Naive thymus-derived CD4-positive, alpha-beta T cell (primary cell): ENCODE measurements at regions of chr19 and their contacts with region 1.

Region 1: DNA sequence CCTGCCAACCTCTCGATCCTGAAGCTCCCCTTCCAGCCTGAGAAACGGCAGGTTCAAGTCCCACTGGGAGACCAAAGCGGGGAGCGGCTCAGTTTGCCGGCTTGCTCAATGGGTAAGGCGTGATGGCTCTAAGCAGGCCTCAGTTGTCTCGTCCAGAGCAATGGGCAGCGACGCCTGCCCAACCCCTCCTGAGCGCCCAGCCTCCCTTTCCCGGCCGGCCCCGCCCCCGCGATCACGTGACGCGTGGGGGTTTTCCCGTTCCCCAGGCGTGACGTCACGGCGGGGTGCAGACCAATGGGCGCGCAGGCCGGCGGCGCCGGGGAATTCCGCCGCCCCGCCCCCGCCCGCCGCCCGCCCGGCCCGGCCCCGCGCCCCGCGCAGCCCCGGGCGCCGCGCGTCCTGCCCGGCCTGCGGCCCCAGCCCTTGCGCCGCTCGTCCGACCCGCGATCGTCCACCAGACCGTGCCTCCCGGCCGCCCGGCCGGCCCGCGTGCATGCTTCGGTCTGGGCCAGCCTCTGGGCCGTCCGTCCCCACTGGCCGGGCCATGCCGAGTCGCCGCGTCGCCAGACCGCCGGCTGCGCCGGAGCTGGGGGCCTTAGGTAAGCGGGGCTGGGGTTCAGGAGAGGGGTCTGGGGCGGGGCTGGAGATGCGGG is at the start of gene RELB:
- DNase-seq: peak; percentile 90 to 100 (median 94)
- ATAC-seq: peak; percentile 75
- H3K4me3 ChIP-seq: peak within 1 kb of the TSS; percentile 92
- H3K4me3 Mint-ChIP-seq: peak within 1 kb of the TSS; percentile 91 to 100 (median 96)
- H3K27ac ChIP-seq: peak within 1 kb of the TSS; percentile 100
- H3K27ac Mint-ChIP-seq: peak within 1 kb of the TSS; percentile 93 to 100 (median 100)
- H3K4me1 ChIP-seq: peaks cover 8 to 13% of the 10 kb centered on the region in 2 donors
- H3K4me1 Mint-ChIP-seq: peaks cover 8 to 25% (median 14%) of the 10 kb centered on the region in 7 donors
- H3K27me3 ChIP-seq: no peaks in the 10 kb centered on the region
- H3K27me3 Mint-ChIP-seq: no peaks in the 10 kb centered on the region
- total RNA-seq, gene RELB: 30.7 to 87.3 (median 71.3) TPM

Region 2: GRCh38 chr19:44752816-44753618 is 248.2 kb before region 1 on chr19:
- CTCF ChIA-PET with region 1: no interaction called
- POLR2A ChIA-PET with region 1: no interaction called
- intact Hi-C with region 1: loop called in 1 of 2 experiments (anchors 1 kb)
- DNase-seq: peak; percentile 80 to 96 (median 95)
- ATAC-seq: peak; percentile 85
- H3K4me3 ChIP-seq: peak overlapping the region; percentile 40
- H3K4me3 Mint-ChIP-seq: peak overlapping the region; percentile 91 to 96 (median 94)
- H3K27ac ChIP-seq: peak overlapping the region; percentile 97
- H3K27ac Mint-ChIP-seq: peak overlapping the region; percentile 93 to 99 (median 97)
- H3K4me1 ChIP-seq: peaks cover 46 to 60% of the 10 kb centered on the region in 2 donors
- H3K4me1 Mint-ChIP-seq: peaks cover 36 to 71% (median 63%) of the 10 kb centered on the region in 7 donors
- H3K27me3 ChIP-seq: no peaks in the 10 kb centered on the region
- H3K27me3 Mint-ChIP-seq: peaks cover 0 to 3% (median 0%) of the 10 kb centered on the region in 5 donors

Region 3: GRCh38 chr19:44890366-44891015 is 110.7 kb before region 1 on chr19:
- CTCF ChIA-PET with region 1: no interaction called
- POLR2A ChIA-PET with region 1: no interaction called
- intact Hi-C with region 1: loop called (anchors 1 kb)
- DNase-seq: peak; percentile 97 to 100 (median 100)
- ATAC-seq: peak; percentile 86
- H3K4me3 ChIP-seq: peak overlapping the region; percentile 69
- H3K4me3 Mint-ChIP-seq: peak overlapping the region; percentile 83 to 93 (median 89)
- H3K27ac ChIP-seq: peak overlapping the region; percentile 84
- H3K27ac Mint-ChIP-seq: peak overlapping the region; percentile 90 to 96 (median 94)
- H3K4me1 ChIP-seq: peaks cover 10 to 20% of the 10 kb centered on the region in 2 donors
- H3K4me1 Mint-ChIP-seq: peaks cover 18 to 44% (median 35%) of the 10 kb centered on the region in 7 donors
- H3K27me3 ChIP-seq: no peaks in the 10 kb centered on the region
- H3K27me3 Mint-ChIP-seq: no peaks in the 10 kb centered on the region

Region 4: DNA sequence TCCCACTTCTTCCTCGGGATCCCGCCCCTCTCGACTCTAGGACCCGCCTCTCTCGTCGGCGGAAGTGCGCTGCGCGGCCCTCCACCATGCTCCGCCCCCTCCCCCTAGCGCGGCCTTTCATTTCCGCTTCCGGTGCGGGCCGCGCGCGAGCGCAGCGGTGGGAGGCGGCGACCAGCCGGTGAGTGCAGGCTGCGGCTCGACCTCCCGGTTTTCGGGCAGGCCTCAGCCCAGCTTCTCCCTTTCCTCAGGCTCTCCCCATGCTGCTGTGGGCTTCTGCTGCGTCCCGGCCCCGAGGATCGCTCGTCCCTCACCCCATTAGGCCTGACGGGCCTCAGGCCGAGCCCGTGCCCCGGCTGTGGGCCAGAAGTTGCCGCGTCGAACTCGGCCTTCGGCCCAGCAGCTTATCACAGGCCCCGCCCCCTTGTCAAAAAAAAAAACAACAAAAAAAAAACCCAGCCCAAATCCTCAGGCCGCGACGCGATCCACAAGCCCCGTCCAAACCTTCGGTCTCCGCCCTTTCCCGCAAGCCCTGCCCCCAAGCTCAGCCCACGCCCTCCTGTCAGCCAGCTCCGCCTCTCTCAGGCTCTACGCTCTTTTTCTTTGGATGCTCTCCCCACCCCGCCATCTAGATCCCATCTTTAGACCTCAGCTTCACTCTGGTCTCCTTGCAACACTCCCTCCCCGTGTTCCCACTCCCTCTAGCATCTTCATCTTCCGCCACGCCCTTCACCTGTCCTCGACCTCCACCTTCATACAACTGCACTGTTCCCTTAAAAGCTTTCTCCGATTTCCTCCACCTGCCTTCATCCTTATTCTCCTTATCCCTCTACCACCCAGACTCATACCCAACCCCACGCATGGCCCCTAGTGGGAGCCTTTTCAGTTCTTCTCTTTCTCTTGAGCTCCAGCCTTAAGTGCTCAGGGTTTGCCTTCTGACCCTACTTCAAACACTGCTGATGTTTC is 38.0 kb after region 1 on chr19 and contains the start of gene CLASRP:
- CTCF ChIA-PET with region 1: no interaction called
- POLR2A ChIA-PET with region 1: interaction called, 18 read pairs
- intact Hi-C with region 1: loop called (anchors 1 kb)
- DNase-seq: peak; percentile 73 to 92 (median 85)
- ATAC-seq: peak; percentile 96
- H3K4me3 ChIP-seq: peak within 1 kb of the TSS; percentile 85
- H3K4me3 Mint-ChIP-seq: peak within 1 kb of the TSS; percentile 89 to 100 (median 99)
- H3K27ac ChIP-seq: peak within 1 kb of the TSS; percentile 100
- H3K27ac Mint-ChIP-seq: peak within 1 kb of the TSS; percentile 90 to 99 (median 98)
- H3K4me1 ChIP-seq: peaks cover 15 to 24% of the 10 kb centered on the region in 2 donors
- H3K4me1 Mint-ChIP-seq: peaks cover 26 to 43% (median 33%) of the 10 kb centered on the region in 7 donors
- H3K27me3 ChIP-seq: no peaks in the 10 kb centered on the region
- H3K27me3 Mint-ChIP-seq: no peaks in the 10 kb centered on the region
- total RNA-seq, gene CLASRP: 94.7 to 185 (median 163) TPM

Region 5: GRCh38 chr19:45079063-45079910 is 78.1 kb after region 1 on chr19 and contains the start of gene GEMIN7:
- CTCF ChIA-PET with region 1: no interaction called
- POLR2A ChIA-PET with region 1: no interaction called
- intact Hi-C with region 1: loop called (anchors 5 kb)
- DNase-seq: peak; percentile 60 to 90 (median 75)
- ATAC-seq: peak; percentile 76
- H3K4me3 ChIP-seq: peak within 1 kb of the TSS; percentile 99
- H3K4me3 Mint-ChIP-seq: peak within 1 kb of the TSS; percentile 87 to 99 (median 94)
- H3K27ac ChIP-seq: peak within 1 kb of the TSS; percentile 86
- H3K27ac Mint-ChIP-seq: peak within 1 kb of the TSS; percentile 79 to 94 (median 84)
- H3K4me1 ChIP-seq: peaks cover 22 to 31% of the 10 kb centered on the region in 2 donors
- H3K4me1 Mint-ChIP-seq: peaks cover 32 to 53% (median 48%) of the 10 kb centered on the region in 7 donors
- H3K27me3 ChIP-seq: no peaks in the 10 kb centered on the region
- H3K27me3 Mint-ChIP-seq: no peaks in the 10 kb centered on the region
- total RNA-seq, gene GEMIN7: 4.9 to 31.6 (median 16.6) TPM

Region 6: DNA sequence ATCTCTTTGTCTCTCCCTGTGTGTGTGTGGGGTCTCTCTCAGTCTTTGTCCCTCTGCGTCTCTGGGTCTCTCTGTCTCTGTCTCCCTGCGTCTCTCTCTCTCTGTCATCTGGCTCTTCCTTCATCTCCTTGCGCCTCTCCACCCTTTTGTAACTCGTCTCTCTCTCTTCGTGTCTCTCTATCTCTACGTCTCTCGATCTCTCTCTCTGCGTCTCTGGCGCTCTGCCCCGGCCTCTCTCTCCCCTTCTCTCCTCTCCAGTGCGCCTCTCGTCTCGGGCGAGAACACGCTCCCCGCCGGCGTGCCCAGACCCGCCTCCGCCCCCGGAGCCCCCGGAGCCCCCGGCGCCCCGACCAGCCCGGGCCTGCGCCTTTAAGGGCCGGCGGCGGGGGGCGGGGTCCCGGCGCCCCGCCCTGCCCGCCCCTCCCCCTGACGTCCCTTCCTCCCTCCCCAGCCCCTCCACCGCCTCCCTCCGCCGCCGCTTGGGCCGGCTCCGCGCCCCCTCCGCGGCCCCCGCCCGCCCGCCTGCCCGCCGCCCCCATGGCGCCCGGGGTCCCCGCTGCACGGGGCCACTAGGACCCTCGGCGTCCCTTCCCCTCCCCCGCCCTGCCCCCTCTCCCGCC is 249.7 kb after region 1 on chr19 and contains the start of gene MARK4:
- CTCF ChIA-PET with region 1: no interaction called
- POLR2A ChIA-PET with region 1: no interaction called
- intact Hi-C with region 1: loop called in 1 of 2 experiments (anchors 5 kb)
- DNase-seq: peak in 8 of 9 donors; percentile 32 to 70 (median 51)
- ATAC-seq: peak; percentile 80
- H3K4me3 ChIP-seq: peak within 1 kb of the TSS; percentile 63
- H3K4me3 Mint-ChIP-seq: peak within 1 kb of the TSS; percentile 87 to 96 (median 94)
- H3K27ac ChIP-seq: peak within 1 kb of the TSS; percentile 72
- H3K27ac Mint-ChIP-seq: peak within 1 kb of the TSS; percentile 28 to 90 (median 81)
- H3K4me1 ChIP-seq: peaks cover 19 to 20% of the 10 kb centered on the region in 2 donors
- H3K4me1 Mint-ChIP-seq: peaks cover 23 to 42% (median 35%) of the 10 kb centered on the region in 7 donors
- H3K27me3 ChIP-seq: no peaks in the 10 kb centered on the region
- H3K27me3 Mint-ChIP-seq: peaks cover 0 to 5% (median 0%) of the 10 kb centered on the region in 5 donors
- total RNA-seq, gene MARK4: 22.4 to 39.2 (median 25.5) TPM

Region 7: DNA sequence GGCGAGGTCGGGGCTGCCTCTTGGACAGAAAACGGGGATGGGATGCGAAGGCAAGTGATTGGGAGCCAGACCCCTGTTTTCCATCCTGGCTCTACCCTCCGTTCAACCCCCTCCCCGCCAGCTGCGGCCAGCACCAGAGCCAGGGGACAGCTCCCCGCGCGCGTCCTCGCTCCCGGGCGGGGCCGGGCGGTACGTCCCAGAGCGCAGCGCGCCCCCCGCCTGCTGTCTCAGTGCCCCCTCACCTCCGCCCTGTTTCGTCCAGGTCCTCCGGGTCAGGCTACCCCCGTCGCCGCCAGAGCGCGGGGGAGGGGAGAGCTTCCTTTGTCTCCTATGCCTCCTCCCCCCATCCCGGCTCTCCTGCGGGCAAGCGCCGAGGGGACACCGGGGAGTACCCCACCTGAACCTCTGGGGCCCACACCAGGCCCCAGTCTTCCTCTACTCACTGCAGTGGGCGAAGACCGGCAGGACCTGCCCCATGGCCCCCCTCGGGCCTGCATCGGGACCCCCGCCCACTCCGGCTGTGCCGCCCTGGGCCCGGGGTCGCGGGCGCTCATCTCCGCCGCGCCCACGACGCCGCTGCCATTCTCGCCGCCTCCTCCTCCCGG is 495.2 kb after region 1 on chr19:
- CTCF ChIA-PET with region 1: no interaction called
- POLR2A ChIA-PET with region 1: no interaction called
- intact Hi-C with region 1: loop called in 1 of 2 experiments (anchors 5 kb)
- DNase-seq: peak in 7 of 9 donors; percentile 44 to 75 (median 55)
- ATAC-seq: peak; percentile 33
- H3K4me3 ChIP-seq: peak overlapping the region; percentile 65
- H3K4me3 Mint-ChIP-seq: peak overlapping the region; percentile 72 to 97 (median 77)
- H3K27ac ChIP-seq: no peak overlapping the region
- H3K27ac Mint-ChIP-seq: peak overlapping the region in 4 of 9 donors; percentile 12 to 87 (median 48)
- H3K4me1 ChIP-seq: peaks cover 28 to 38% of the 10 kb centered on the region in 2 donors
- H3K4me1 Mint-ChIP-seq: peaks cover 28 to 52% (median 48%) of the 10 kb centered on the region in 7 donors
- H3K27me3 ChIP-seq: no peaks in the 10 kb centered on the region
- H3K27me3 Mint-ChIP-seq: peaks cover 12 to 37% (median 19%) of the 10 kb centered on the region in 5 donors